Activated CD8-positive, alpha-beta T cell treated with anti-CD3 and anti-CD28 coated beads for 36 hours (primary cell): ENCODE measurements at regions of chr3 and their contacts with region 1.

Region 1: GRCh38 chr3:31531992-31532586 is 636 bp upstream of the STT3B start:
- DNase-seq: peak; percentile 99
- ATAC-seq: peak; percentile 89
- H3K4me3 Mint-ChIP-seq: no peak overlapping the region
- H3K27ac Mint-ChIP-seq: peak overlapping the region; percentile 99
- H3K4me1 Mint-ChIP-seq: peaks cover 12% of the 10 kb centered on the region
- H3K27me3 Mint-ChIP-seq: no peaks in the 10 kb centered on the region
- CTCF ChIP-seq: no peak

Region 2: DNA sequence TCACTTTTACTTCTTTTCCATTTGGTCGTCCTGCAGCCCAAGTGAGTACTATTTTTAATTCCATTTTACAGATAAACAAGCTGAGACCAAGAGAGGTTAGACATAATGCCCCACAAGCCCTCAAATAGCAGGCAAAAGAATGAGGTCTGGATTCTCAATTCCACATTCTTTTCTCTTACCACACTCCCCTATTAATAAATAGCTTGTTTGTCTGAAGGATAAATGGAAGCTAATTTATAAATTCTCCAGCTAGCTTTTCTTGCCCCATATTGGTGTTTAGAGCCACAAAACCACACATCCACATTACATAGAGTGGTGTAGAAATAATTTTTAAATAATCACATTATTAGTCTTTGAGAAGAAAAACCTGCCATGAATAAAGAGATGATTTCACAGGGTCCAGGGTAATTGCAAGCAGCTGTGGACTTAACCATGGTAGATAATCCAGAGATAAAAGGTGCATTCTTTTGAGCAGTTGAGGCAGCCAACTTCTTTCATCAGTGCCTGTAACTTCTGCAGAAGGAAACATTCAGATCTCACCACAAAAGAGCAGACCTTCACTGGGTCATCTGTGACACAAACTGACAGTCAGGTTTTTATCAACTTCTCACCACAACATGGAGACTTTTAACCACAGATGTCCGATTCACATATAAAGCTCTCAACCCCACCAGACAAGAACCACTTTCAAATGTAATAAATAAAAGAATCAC is 312.8 kb before region 1 on chr3:
- CTCF ChIA-PET with region 1: no interaction called
- POLR2A ChIA-PET with region 1: interaction called, 4 read pairs
- intact Hi-C with region 1: loop called (anchors 10 kb)
- DNase-seq: no peak
- ATAC-seq: no peak
- H3K4me3 Mint-ChIP-seq: no peak overlapping the region
- H3K27ac Mint-ChIP-seq: no peak overlapping the region
- H3K4me1 Mint-ChIP-seq: peaks cover 74% of the 10 kb centered on the region
- H3K27me3 Mint-ChIP-seq: no peaks in the 10 kb centered on the region
- CTCF ChIP-seq: no peak

Region 3: GRCh38 chr3:31544634-31545033 is 12.5 kb after region 1 on chr3:
- CTCF ChIA-PET with region 1: interaction called, 13 read pairs
- POLR2A ChIA-PET with region 1: interaction called, 15 read pairs
- intact Hi-C with region 1: no loop called
- DNase-seq: no peak
- ATAC-seq: no peak
- H3K4me3 Mint-ChIP-seq: no peak overlapping the region
- H3K27ac Mint-ChIP-seq: peak overlapping the region; percentile 13
- H3K4me1 Mint-ChIP-seq: peaks cover 81% of the 10 kb centered on the region
- H3K27me3 Mint-ChIP-seq: no peaks in the 10 kb centered on the region
- CTCF ChIP-seq: no peak

Region 4: GRCh38 chr3:31550452-31551251 is 18.6 kb after region 1 on chr3:
- CTCF ChIA-PET with region 1: interaction called, 13 read pairs
- POLR2A ChIA-PET with region 1: interaction called, 15 read pairs
- intact Hi-C with region 1: no loop called
- DNase-seq: peak; percentile 35
- ATAC-seq: peak; percentile 73
- H3K4me3 Mint-ChIP-seq: no peak overlapping the region
- H3K27ac Mint-ChIP-seq: peak overlapping the region; percentile 46
- H3K4me1 Mint-ChIP-seq: peaks cover 74% of the 10 kb centered on the region
- H3K27me3 Mint-ChIP-seq: no peaks in the 10 kb centered on the region
- CTCF ChIP-seq: peak; percentile 87

Region 5: DNA sequence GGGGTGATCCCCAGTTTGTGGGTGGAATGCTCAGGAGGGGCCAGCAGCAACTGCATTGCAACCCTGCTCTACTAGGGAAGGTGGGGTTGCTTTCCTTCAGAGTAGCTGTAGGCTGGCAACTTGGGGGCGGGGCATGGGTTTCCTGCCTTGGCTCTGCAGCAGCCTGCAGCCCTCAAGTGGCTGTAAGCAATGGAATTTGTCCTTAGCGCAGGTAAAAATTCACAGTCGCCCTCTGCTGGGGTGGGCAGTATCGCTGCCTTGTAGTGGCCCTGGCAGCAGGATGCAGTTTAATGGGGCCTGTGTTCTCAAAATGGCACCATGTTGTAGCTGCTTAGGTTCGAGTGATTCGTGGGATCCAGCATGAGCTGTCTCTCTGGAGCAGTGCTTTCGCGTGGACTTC is 30.4 kb after region 1 on chr3:
- CTCF ChIA-PET with region 1: interaction called, 5 read pairs
- POLR2A ChIA-PET with region 1: interaction called, 10 read pairs
- intact Hi-C with region 1: no loop called
- DNase-seq: peak; percentile 53
- ATAC-seq: peak; percentile 31
- H3K4me3 Mint-ChIP-seq: no peak overlapping the region
- H3K27ac Mint-ChIP-seq: peak overlapping the region; percentile 17
- H3K4me1 Mint-ChIP-seq: peaks cover 85% of the 10 kb centered on the region
- H3K27me3 Mint-ChIP-seq: no peaks in the 10 kb centered on the region
- CTCF ChIP-seq: no peak

Region 6: DNA sequence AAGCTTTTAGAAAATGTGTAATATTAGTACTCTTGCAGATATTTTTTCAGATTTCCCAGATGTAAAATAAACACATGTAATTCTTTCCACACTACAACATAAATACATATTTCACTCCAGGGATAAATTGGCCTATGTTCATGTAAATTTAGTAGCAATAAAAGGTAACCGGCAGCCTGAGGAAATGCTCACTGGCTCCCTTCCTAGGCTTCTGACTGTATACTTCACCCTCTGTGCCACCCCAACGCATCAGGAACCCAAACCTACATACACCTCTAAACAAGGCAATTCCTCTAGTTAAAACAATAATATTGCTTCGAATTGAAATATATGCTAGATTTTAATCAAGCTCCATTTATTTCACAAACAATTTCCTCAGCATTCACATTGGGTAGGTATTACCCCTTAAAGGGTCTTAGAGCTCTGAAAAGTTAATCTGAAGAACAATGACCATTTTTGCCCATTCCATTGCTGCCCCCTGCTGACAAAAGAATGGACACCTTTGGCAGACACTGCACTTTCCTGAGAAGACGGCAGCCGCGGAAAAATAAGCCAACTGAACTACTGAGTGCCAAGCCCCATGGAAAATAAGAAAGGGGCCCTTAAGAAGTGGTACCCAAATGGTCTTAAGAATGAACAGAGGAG is 236.5 kb after region 1 on chr3:
- CTCF ChIA-PET with region 1: interaction called, 3 read pairs
- POLR2A ChIA-PET with region 1: interaction called, 3 read pairs
- intact Hi-C with region 1: loop called (anchors 10 kb)
- DNase-seq: peak; percentile 75
- ATAC-seq: peak; percentile 57
- H3K4me3 Mint-ChIP-seq: no peak overlapping the region
- H3K27ac Mint-ChIP-seq: no peak overlapping the region
- H3K4me1 Mint-ChIP-seq: peaks cover 13% of the 10 kb centered on the region
- H3K27me3 Mint-ChIP-seq: no peaks in the 10 kb centered on the region
- CTCF ChIP-seq: peak; percentile 54